Cardiac septum (tissue), 1 donor: ENCODE measurements at regions of chr1 and their contacts with region 1.

Region 1: DNA sequence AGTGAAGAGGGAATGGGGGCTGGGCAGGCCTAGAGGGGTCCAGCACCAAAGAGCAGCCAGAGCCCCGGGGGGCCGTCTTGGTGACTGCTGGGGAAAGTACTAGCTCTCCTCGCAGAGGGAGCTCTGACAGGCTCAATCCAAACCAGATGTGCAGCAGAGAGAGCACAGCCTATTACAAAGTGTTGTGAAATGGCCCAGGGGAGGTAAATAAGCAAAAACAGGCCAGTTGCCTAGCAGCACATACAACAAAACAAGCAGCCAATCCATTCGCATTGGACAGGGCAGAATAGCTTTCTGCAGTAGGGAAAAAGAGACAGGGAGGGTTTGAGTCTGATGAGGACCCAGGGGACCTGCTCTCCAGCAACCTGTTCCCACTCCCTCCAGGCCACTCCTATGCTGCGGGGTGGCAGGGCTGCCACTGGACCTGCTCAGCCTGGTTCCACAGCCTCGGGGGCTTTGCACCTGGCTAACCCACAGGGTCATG is 239.6 kb upstream of the FGGY start:
- DNase-seq: no peak

Region 2: DNA sequence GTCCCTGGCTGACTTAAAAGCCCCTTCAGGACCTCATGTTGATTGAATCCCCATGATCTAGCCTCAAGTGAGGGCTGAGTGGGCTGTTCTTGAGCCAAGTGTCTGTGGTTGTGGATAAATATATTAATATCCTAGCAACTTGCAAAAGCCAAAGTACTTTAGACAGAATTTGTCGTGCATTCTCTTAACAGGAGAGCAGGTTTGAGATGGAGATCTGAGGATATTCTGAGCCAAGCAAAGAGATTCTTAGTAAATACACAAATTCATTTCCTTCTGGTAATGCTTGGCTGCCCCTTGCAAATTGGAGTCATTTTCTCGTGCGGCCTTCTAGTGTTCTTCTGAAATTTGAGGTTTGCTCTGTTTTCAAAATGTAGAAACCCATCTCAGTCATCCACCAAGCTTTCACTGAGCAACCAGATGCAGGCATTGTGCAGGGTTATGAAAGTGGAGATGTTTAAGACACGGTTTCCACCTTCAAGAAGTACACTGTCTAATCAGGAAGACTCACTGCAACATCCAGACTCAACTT is 31.3 kb before region 1 on chr1:
- intact Hi-C with region 1: loop called (anchors 1 kb)
- DNase-seq: no peak